ENCODE measurements at regions of chr17 and their contacts with region 1.

Region 1: DNA sequence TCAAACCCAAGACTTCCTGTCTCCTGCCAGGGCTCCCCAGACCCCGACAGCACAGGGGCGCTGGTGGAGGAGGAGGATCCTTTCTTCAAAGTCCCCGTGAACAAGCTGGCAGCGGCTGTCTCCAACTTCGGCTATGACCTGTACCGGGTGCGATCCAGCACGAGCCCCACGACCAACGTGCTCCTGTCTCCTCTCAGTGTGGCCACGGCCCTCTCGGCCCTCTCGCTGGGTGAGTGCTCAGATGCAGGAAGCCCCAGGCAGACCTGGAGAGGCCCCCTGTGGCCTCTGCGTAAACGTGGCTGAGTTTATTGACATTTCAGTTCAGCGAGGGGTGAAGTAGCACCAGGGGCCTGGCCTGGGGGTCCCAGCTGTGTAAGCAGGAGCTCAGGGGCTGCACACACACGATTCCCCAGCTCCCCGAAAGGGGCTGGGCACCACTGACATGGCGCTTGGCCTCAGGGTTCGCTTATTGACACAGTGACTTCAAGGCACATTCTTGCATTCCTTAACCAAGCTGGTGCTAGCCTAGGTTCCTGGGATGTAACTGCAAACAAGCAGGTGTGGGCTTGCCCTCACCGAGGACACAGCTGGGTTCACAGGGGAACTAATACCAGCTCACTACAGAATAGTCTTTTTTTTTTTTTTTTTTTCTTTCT is 8.1 kb downstream of the SERPINF1 start:
- DNase-seq: peak; percentile 95
- ATAC-seq: peak; percentile 89
- H3K4me3 ChIP-seq: peak overlapping the region in 1 of 3 experiments; percentile 14; a peak in 1 of 6 replicates
- H3K27ac ChIP-seq: peak overlapping the region; percentile 83
- H3K4me1 ChIP-seq: peaks cover 55% of the 10 kb centered on the region
- H3K27me3 ChIP-seq: no peaks in the 10 kb centered on the region
- CTCF ChIP-seq: peak; percentile 48
- EP300 ChIP-seq: peak in 1 of 2 experiments; percentile 52; a peak in 1 of 4 replicates
- POLR2A ChIP-seq: no peak; a peak in 1 of 4 replicates
- RAD21 ChIP-seq: peak; percentile 32; the same call in 1 of the 2 replicates

Region 2: DNA sequence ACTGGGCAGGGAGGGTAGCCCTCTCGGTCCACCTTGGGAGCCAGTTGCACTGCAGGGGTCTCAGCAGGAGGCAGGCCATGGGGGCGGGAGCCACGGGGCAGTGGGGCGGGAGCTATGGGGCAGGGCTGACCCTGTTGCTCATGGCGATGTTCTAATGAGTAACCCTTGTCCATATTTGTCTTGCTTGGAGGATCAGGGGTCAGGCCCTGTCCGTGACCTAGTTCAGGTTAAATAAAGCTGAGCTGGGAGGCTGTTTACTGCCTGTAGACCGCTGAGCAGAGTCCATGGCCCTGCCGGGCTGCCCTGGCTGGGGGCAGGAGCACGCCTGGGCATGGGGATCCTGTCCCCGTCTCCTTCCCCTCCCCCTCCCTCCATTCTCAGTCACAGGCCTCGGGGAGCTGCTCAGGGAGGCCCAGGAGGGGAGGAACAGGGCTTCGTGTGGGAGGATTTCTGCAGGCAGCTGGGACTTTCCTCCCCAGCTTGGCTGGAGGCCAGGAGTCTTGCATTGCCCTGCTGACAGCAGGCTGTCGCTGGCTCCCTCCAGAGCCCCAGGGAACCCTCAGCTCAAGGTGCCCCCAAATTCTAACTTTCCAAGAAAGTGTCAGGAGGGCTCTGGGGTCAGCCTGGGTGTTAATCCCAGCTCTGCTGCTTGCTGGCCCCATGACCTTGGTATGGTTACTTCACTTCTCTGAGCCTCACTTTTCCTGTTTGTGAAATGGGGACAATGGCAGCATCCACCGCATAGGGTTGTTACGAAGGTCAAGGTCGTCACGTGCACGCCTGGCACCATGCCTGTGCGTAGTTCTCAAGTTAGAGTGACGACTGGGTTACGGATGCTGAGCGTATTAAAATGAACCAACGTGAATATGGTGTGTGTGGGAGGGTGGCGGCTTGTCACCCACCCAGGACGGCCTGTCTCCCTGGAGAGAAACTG is 33.3 kb before region 1 on chr17:
- CTCF ChIA-PET with region 1: no interaction called
- POLR2A ChIA-PET with region 1: interaction called, 283 read pairs
- in situ Hi-C with region 1: no loop called
- intact Hi-C with region 1: no loop called
- DNase-seq: peak; percentile 98
- ATAC-seq: peak; percentile 92
- H3K4me3 ChIP-seq: peak overlapping the region in 2 of 3 experiments; percentile 57 to 60; a peak in 3 of 6 replicates
- H3K27ac ChIP-seq: peak overlapping the region; percentile 83
- H3K4me1 ChIP-seq: peaks cover 51% of the 10 kb centered on the region
- H3K27me3 ChIP-seq: no peaks in the 10 kb centered on the region
- CTCF ChIP-seq: peak; percentile 12
- EP300 ChIP-seq: peak; percentile 92 to 99
- POLR2A ChIP-seq: peak in 1 of 2 experiments; percentile 45; a peak in 1 of 4 replicates
- RAD21 ChIP-seq: peak; percentile 44

Region 3: GRCh38 chr17:1752425-1753262 is 17.3 kb before region 1 on chr17:
- CTCF ChIA-PET with region 1: no interaction called
- POLR2A ChIA-PET with region 1: interaction called, 150 read pairs
- in situ Hi-C with region 1: no loop called
- intact Hi-C with region 1: no loop called
- DNase-seq: no peak
- ATAC-seq: no peak
- H3K4me3 ChIP-seq: no peak overlapping the region
- H3K27ac ChIP-seq: peak overlapping the region; percentile 19
- H3K4me1 ChIP-seq: peaks cover 60% of the 10 kb centered on the region
- H3K27me3 ChIP-seq: no peaks in the 10 kb centered on the region
- CTCF ChIP-seq: no peak
- EP300 ChIP-seq: no peak
- POLR2A ChIP-seq: peak in 1 of 2 experiments; percentile 45; a peak in 3 of 4 replicates
- RAD21 ChIP-seq: no peak

Region 4: GRCh38 chr17:1810450-1811103 is 40.6 kb after region 1 on chr17:
- CTCF ChIA-PET with region 1: no interaction called
- POLR2A ChIA-PET with region 1: interaction called, 17 read pairs
- in situ Hi-C with region 1: no loop called
- intact Hi-C with region 1: no loop called
- DNase-seq: peak; percentile 87
- ATAC-seq: peak; percentile 100
- H3K4me3 ChIP-seq: peak overlapping the region in 2 of 3 experiments; percentile 0 to 57; a peak in 4 of 6 replicates
- H3K27ac ChIP-seq: peak overlapping the region; percentile 87
- H3K4me1 ChIP-seq: peaks cover 41% of the 10 kb centered on the region
- H3K27me3 ChIP-seq: no peaks in the 10 kb centered on the region
- CTCF ChIP-seq: 0 out of 2 replicates have a peak, but pooled peaks have one; percentile 6
- EP300 ChIP-seq: peak; percentile 25 to 66; a peak in 3 of 4 replicates
- POLR2A ChIP-seq: peak; percentile 80 to 89
- RAD21 ChIP-seq: peak; percentile 19

Measured in HepG2 (cell line).